ENCODE measurements at regions of chr2 and their contacts with region 1.

Region 1: GRCh38 chr2:179129574-179130238 is 79.8 kb upstream of the CCDC141 start:
- DNase-seq: no peak
- H3K4me3 ChIP-seq: no peak overlapping the region
- H3K27ac ChIP-seq: no peak overlapping the region
- H3K4me1 ChIP-seq: no peaks in the 10 kb centered on the region
- H3K27me3 ChIP-seq: no peaks in the 10 kb centered on the region
- CTCF ChIP-seq: peak; percentile 74

Region 2: GRCh38 chr2:178891265-178891958 is 238.3 kb before region 1 on chr2:
- CTCF ChIA-PET with region 1: no interaction called
- POLR2A ChIA-PET with region 1: no interaction called
- intact Hi-C with region 1: loop called (anchors 5 kb)
- DNase-seq: peak; percentile 72
- H3K4me3 ChIP-seq: no peak overlapping the region
- H3K27ac ChIP-seq: no peak overlapping the region
- H3K4me1 ChIP-seq: no peaks in the 10 kb centered on the region
- H3K27me3 ChIP-seq: no peaks in the 10 kb centered on the region
- CTCF ChIP-seq: peak; percentile 87

Region 3: GRCh38 chr2:178990533-178991241 is 139.0 kb before region 1 on chr2:
- CTCF ChIA-PET with region 1: interaction called, 10 read pairs
- POLR2A ChIA-PET with region 1: no interaction called
- intact Hi-C with region 1: no loop called
- DNase-seq: no peak
- H3K4me3 ChIP-seq: no peak overlapping the region
- H3K27ac ChIP-seq: no peak overlapping the region
- H3K4me1 ChIP-seq: no peaks in the 10 kb centered on the region
- H3K27me3 ChIP-seq: no peaks in the 10 kb centered on the region
- CTCF ChIP-seq: no peak

Region 4: GRCh38 chr2:180033993-180034894 is 904.5 kb after region 1 on chr2:
- CTCF ChIA-PET with region 1: no interaction called
- POLR2A ChIA-PET with region 1: no interaction called
- intact Hi-C with region 1: no loop called
- DNase-seq: peak; percentile 93
- H3K4me3 ChIP-seq: no peak overlapping the region
- H3K27ac ChIP-seq: peak overlapping the region; percentile 58
- H3K4me1 ChIP-seq: peaks cover 20% of the 10 kb centered on the region
- H3K27me3 ChIP-seq: no peaks in the 10 kb centered on the region
- CTCF ChIP-seq: no peak

Region 5: DNA sequence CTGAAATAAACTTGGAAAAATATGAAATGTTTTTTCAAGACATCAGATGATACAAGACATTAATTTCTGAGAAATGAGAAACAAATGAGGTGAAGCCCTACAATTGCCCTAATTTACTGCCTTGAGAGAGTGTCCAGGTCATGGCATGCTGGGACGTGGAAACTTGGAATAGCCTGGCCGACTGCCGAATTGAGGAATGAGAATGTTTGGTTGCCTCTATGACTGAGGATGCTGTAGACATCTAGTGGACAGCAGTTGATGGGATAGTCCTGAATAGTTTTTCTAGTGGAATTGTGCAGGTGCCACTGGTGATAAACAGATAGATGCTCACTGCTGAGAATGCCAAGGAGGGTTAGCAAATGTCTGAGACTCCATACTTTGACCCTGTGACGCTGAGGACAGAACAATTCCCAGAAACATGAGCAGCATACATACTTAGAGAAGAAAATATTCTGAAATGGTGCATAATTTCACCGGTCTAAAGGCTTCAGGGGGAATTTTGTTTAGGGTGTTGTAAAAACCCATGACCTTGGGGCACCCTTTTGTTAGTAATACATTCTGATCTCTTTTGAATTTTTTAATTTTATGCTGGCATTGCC is 933.9 kb after region 1 on chr2:
- CTCF ChIA-PET with region 1: no interaction called
- POLR2A ChIA-PET with region 1: no interaction called
- intact Hi-C with region 1: no loop called
- DNase-seq: no peak
- H3K4me3 ChIP-seq: no peak overlapping the region
- H3K27ac ChIP-seq: no peak overlapping the region
- H3K4me1 ChIP-seq: no peaks in the 10 kb centered on the region
- H3K27me3 ChIP-seq: no peaks in the 10 kb centered on the region
- CTCF ChIP-seq: no peak

Region 6: GRCh38 chr2:180733337-180733736 is 1603.6 kb after region 1 on chr2:
- CTCF ChIA-PET with region 1: no interaction called
- POLR2A ChIA-PET with region 1: no interaction called
- intact Hi-C with region 1: no loop called
- DNase-seq: peak; percentile 25
- H3K4me3 ChIP-seq: no peak overlapping the region
- H3K27ac ChIP-seq: no peak overlapping the region
- H3K4me1 ChIP-seq: peaks cover 6% of the 10 kb centered on the region
- H3K27me3 ChIP-seq: no peaks in the 10 kb centered on the region
- CTCF ChIP-seq: peak; percentile 17; the same call in 1 of the 2 replicates